Activated CD8-positive, alpha-beta T cell treated with anti-CD3 and anti-CD28 coated beads, Interleukin-2, amount 10 ng/mL, durations not matched to agents 7 days and 5 days (primary cell): ENCODE measurements at regions of chr1 and their contacts with region 1.

Region 1: DNA sequence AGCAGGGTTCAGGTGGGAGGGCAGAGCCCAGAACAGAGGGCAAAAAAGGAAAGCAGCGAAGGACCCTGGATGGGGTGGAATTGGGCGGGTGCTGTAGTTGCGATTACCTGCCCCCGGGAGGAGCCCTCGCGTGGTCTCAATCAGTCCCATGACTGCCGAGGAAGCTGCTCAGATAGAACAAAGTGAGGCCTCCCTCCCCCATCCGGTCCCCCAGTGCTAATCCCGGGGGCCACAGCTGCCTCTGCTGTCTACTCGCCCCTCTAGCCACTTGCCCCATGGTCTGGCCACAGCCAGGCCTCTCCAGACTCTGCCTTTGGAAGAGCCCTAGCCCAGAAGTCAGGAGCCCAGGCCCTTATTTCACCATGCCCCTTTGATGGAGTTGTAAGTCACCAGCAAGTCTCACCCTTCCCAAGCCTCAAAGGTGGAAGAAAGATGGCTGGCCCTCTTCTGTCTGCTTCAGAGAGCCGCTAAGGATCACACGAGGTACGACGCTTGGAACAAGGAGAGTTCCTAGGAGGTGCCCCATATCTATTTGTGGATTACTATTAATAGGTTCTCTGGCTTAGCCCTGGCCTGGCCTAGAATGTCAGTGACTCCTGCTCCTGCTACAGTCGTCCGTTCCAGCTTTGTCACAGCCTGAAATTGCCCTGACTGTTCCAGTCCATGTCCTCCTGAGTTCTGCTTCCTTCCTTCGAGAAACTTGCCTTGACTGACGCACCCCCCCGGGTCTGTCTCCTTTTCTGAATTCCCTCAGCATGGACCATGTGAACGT is 16.4 kb downstream of the ECHDC2 start:
- DNase-seq: peak; percentile 67
- ATAC-seq: peak; percentile 93
- H3K4me3 Mint-ChIP-seq: no peak overlapping the region
- H3K27ac Mint-ChIP-seq: no peak overlapping the region
- H3K4me1 Mint-ChIP-seq: peaks cover 5% of the 10 kb centered on the region
- H3K27me3 Mint-ChIP-seq: no peaks in the 10 kb centered on the region

Region 2: DNA sequence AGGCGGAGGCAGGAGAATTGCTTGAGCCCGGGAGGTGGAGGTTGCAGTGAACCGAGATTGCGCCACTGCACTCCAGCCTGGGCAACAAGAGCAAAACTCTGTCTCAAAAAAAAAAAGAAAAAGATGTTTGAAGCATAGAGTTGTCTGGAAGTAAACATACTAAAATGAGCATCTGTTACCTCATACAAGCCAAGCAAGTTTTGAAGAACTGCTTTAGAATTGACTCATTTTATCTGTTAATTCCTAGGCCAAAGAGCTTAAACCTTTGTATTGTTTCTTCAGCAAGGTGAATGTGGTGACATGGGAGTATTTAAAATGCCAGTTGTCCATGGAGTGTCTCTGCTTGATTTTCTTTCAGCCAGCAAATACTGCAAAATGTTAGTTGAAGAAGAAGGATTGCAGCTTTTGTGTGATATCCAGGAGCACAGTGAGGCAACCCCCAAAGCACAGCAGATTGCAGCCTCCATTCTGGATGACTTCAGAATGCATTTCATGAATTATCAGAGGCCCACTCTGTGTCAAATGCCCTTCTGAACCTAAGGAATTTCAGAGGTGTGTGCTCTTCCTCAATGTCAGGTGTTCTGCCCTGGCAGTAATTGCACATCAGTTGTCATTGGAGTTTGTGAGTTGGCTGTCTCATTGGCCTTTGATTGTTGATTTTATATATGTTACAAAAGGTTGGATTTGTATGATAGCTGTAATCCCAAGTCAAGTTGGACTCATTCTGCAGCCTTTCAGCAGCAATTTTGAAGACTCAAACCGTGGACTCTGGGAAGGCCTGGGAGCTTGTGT is 12.5 kb before region 1 on chr1:
- CTCF ChIA-PET with region 1: interaction called, 18 read pairs
- POLR2A ChIA-PET with region 1: no interaction called
- DNase-seq: no peak
- ATAC-seq: no peak
- H3K4me3 Mint-ChIP-seq: no peak overlapping the region
- H3K27ac Mint-ChIP-seq: no peak overlapping the region
- H3K4me1 Mint-ChIP-seq: no peaks in the 10 kb centered on the region
- H3K27me3 Mint-ChIP-seq: peaks cover 2% of the 10 kb centered on the region

Region 3: DNA sequence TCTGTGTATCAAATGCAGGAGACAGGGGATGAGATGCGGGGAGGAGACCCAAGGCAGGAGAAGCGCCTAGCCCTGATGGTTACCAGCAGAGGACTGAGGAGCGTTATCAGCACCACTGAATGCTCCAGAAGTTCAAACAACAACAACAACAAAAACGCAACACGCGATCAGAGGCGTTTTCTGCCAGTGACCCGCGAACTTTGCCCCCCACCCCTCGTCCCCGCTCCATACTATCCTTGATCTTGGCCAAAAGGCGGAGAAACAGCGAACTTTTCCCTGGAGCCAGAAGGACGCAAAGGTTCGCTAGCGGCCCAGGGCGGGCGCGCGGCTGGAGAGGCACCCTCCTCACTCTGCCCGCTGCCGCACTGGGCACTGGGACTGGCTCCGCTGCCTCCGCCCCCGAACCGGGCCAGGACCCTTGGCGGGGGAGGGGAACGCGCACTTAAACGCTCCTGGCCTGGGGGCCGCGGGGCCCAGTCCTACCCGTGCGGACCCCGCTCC is 15.7 kb after region 1 on chr1:
- CTCF ChIA-PET with region 1: interaction called, 11 read pairs
- POLR2A ChIA-PET with region 1: no interaction called
- DNase-seq: no peak
- ATAC-seq: no peak
- H3K4me3 Mint-ChIP-seq: peak overlapping the region; percentile 78
- H3K27ac Mint-ChIP-seq: no peak overlapping the region
- H3K4me1 Mint-ChIP-seq: peaks cover 27% of the 10 kb centered on the region
- H3K27me3 Mint-ChIP-seq: no peaks in the 10 kb centered on the region

Region 4: DNA sequence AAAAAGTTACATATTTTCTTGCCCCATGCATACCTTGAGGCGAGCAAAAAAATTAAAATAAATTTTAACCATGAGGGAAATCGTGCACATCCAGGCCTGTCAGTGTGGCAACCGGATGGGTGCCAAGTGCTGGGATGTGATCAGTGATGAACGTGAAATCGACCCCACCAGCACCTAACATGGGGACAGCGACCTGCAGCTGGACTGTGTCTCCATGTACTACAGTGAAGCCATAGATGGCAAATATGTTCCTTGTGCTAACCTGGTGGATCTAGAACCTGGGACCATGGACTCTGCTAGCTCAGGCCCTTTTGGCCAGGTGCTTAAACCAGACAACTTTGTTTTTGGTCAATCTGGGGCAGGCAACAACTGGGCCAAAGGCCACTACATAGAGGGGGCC is 89.5 kb after region 1 on chr1:
- CTCF ChIA-PET with region 1: no interaction called
- POLR2A ChIA-PET with region 1: no interaction called
- DNase-seq: no peak
- ATAC-seq: no peak
- H3K4me3 Mint-ChIP-seq: no peak overlapping the region
- H3K27ac Mint-ChIP-seq: no peak overlapping the region
- H3K4me1 Mint-ChIP-seq: no peaks in the 10 kb centered on the region
- H3K27me3 Mint-ChIP-seq: no peaks in the 10 kb centered on the region

Region 5: DNA sequence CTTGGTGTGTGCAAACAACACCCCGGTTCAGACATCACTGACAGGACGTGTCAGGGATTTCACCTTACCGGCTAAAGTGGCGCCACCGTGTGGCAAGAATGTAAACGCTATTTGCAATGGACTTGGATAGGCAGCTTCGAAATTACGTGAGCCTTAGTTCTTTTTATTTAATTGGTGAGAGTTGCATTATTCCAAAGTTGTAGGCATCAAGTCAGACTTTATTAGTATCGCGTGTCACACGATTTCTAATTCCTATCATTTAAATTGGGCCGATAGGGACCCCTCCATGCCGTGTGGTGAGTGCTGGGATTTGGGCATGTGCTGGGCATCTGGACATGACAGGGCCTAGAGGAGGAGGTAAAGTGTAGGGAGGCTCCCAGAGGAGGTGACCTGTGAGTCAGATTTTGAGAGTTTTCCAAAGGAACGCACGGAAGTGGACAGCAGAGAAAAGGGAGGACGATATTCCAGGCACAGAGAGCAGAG is 277.0 kb after region 1 on chr1:
- CTCF ChIA-PET with region 1: interaction called, 11 read pairs
- POLR2A ChIA-PET with region 1: no interaction called
- DNase-seq: peak; percentile 89
- ATAC-seq: peak; percentile 87
- H3K4me3 Mint-ChIP-seq: no peak overlapping the region
- H3K27ac Mint-ChIP-seq: no peak overlapping the region
- H3K4me1 Mint-ChIP-seq: no peaks in the 10 kb centered on the region
- H3K27me3 Mint-ChIP-seq: peaks cover 13% of the 10 kb centered on the region